A549 (cell line): ENCODE measurements at regions of chr2 and their contacts with region 1.

Region 1: DNA sequence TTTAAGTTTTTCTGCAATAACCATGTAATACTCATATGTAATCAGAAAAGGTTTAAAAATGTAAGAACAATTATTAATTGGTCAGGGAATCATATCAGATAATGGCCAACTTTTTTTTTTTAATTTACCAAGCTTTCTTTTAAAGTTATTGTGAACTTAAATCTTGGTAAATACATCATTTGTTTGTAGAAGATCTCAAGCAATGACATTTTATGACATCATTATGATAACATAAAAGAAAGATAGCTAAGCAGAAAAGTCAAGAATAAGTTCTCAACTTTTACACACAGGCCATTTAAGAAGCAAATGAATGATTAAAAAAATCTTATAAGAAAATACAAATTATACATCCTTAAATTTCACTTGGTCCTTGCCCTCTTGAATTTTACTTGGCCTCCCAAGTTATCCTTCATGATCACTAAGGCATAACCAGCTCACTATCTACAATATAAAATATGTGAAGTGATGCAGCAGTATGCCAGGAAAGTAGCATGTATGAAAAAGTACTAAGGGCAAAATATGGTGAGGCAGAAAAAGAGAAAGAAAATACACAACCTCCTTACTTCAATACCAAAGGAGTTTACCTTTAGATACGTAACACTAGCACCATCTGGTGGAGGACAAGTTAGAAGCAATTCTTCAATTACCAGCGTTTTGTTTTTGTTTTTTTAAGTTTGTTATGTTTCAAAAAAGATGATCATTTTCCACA is 116.6 kb downstream of the SRBD1 start:
- DNase-seq: peak; percentile 34 to 79
- ATAC-seq: peak; percentile 59 to 63; a peak in 5 of 6 replicates
- H3K4me3 ChIP-seq: no peak overlapping the region
- H3K27ac ChIP-seq: no peak overlapping the region; a peak in 1 of 6 replicates
- H3K4me1 ChIP-seq: peaks cover 2% of the 10 kb centered on the region; the same call in 1 of the 3 replicates
- CTCF ChIP-seq: peak; percentile 97
- EP300 ChIP-seq: no peak; a peak in 1 of 5 replicates
- POLR2A ChIP-seq: no peak
- RAD21 ChIP-seq: peak; percentile 96 to 97

Region 2: DNA sequence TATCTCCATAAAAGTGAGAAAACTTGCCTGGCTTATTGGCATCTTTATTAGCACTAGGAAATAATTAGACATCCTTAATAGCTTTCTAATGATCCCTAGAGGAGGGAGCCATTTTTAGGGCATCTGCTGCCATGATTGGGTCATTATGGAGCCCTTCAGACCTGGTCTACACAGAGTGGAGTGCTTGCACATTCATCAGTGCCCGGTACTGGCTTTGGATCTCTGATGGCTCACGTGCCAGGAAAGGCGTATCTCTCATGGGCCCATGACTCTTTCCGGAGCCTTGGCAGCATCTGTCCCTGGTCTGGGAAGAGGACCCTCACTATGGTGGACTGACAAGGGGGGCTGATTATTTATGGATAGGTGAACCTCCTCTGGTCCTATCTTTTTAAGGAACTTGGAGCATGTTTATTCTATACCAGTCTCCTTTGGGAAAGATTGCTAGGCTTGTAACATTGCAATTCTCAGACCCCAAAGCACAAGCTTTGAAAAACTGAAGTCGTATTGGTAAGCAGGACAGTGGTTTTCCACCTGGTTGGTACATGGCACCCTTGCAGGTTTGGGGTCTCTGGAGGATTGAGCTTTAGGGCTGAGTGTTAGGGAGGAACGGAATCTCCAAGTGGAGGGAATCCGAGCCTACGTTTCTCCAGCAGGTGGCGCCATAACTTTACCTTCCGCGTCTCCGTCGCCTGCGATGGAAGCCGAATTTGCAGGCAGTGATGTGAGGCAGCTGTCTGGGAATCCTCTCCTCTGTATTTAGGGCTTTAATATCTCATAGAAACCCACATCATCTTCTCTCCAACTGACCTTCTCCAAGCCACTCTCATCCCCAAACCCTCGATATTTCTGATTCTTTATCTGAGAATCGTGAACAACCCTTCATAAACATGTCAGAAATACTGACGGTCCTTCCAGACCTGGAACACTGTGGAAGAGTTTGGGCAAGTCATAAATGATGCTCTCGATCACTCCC is 513.0 kb before region 1 on chr2:
- CTCF ChIA-PET with region 1: interaction called, 305 read pairs
- POLR2A ChIA-PET with region 1: no interaction called
- DNase-seq: peak; percentile 81 to 83
- ATAC-seq: peak; percentile 84 to 97
- H3K4me3 ChIP-seq: no peak overlapping the region
- H3K27ac ChIP-seq: no peak overlapping the region
- H3K4me1 ChIP-seq: no peaks in the 10 kb centered on the region
- CTCF ChIP-seq: peak; percentile 97
- EP300 ChIP-seq: no peak
- POLR2A ChIP-seq: no peak
- RAD21 ChIP-seq: peak; percentile 97 to 99

Region 3: GRCh38 chr2:45000921-45001868 is 493.2 kb before region 1 on chr2:
- CTCF ChIA-PET with region 1: interaction called, 16 read pairs
- POLR2A ChIA-PET with region 1: no interaction called
- DNase-seq: no peak
- ATAC-seq: no peak
- H3K4me3 ChIP-seq: no peak overlapping the region
- H3K27ac ChIP-seq: no peak overlapping the region
- H3K4me1 ChIP-seq: no peaks in the 10 kb centered on the region
- CTCF ChIP-seq: no peak
- EP300 ChIP-seq: no peak
- POLR2A ChIP-seq: no peak
- RAD21 ChIP-seq: no peak

Region 4: GRCh38 chr2:45024600-45025291 is 469.7 kb before region 1 on chr2:
- CTCF ChIA-PET with region 1: interaction called, 76 read pairs
- POLR2A ChIA-PET with region 1: no interaction called
- DNase-seq: peak; percentile 72 to 89
- ATAC-seq: peak; percentile 73 to 85
- H3K4me3 ChIP-seq: no peak overlapping the region
- H3K27ac ChIP-seq: peak overlapping the region; percentile 50 to 82
- H3K4me1 ChIP-seq: peaks cover 18% of the 10 kb centered on the region
- CTCF ChIP-seq: peak; percentile 70
- EP300 ChIP-seq: no peak
- POLR2A ChIP-seq: no peak
- RAD21 ChIP-seq: peak; percentile 63 to 77

Region 5: GRCh38 chr2:45510701-45511420 is 16.4 kb after region 1 on chr2:
- CTCF ChIA-PET with region 1: interaction called, 33 read pairs
- POLR2A ChIA-PET with region 1: no interaction called
- DNase-seq: no peak
- ATAC-seq: no peak
- H3K4me3 ChIP-seq: no peak overlapping the region
- H3K27ac ChIP-seq: no peak overlapping the region
- H3K4me1 ChIP-seq: no peaks in the 10 kb centered on the region
- CTCF ChIP-seq: no peak
- EP300 ChIP-seq: no peak
- POLR2A ChIP-seq: no peak
- RAD21 ChIP-seq: no peak